ENCODE measurements at regions of chr19 and their contacts with region 1.

Region 1: DNA sequence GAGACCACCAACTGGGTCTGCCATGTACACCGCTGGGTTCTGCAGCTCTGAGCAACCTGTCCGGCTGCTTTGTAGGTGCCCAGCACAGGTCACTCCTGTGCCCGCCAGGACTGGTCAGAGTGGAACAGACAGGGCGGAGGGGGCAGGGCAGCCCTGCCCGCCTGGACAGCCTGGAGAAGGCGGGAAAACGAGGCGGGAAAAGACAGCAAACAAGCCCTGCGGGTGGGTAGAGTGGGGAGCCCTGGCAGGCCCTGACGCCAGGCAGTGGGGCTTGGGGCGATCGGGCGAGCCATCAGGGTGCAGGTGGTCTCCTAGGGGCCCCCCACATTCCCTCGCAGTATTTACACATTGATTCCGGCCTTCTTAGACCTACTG is 533 bp upstream of the UHRF1 start:
- DNase-seq: peak in 1 of 2 experiments; percentile 14
- H3K4me3 ChIP-seq: peak overlapping the region; percentile 84; the same call in 1 of the 2 replicates
- H3K4me3 Mint-ChIP-seq: peak overlapping the region; percentile 76
- H3K27ac Mint-ChIP-seq: peak overlapping the region; percentile 22
- H3K4me1 ChIP-seq: peaks cover 20% of the 10 kb centered on the region
- H3K4me1 Mint-ChIP-seq: peaks cover 13% of the 10 kb centered on the region
- H3K27me3 ChIP-seq: no peaks in the 10 kb centered on the region
- H3K27me3 Mint-ChIP-seq: no peaks in the 10 kb centered on the region
- CTCF ChIP-seq: no peak

Region 2: GRCh38 chr19:4873930-4874329 is 34.8 kb before region 1 on chr19:
- CTCF ChIA-PET with region 1: interaction called, 5 read pairs
- POLR2A ChIA-PET with region 1: no interaction called
- intact Hi-C with region 1: loop called (anchors 1 kb)
- DNase-seq: no peak
- H3K4me3 ChIP-seq: no peak overlapping the region
- H3K4me3 Mint-ChIP-seq: no peak overlapping the region
- H3K27ac Mint-ChIP-seq: no peak overlapping the region
- H3K4me1 ChIP-seq: no peaks in the 10 kb centered on the region
- H3K4me1 Mint-ChIP-seq: peaks cover 6% of the 10 kb centered on the region
- H3K27me3 ChIP-seq: no peaks in the 10 kb centered on the region
- H3K27me3 Mint-ChIP-seq: no peaks in the 10 kb centered on the region
- CTCF ChIP-seq: no peak

Region 3: GRCh38 chr19:5850743-5851293 is 942.0 kb after region 1 on chr19:
- CTCF ChIA-PET with region 1: no interaction called
- POLR2A ChIA-PET with region 1: interaction called, 14 read pairs
- intact Hi-C with region 1: no loop called
- DNase-seq: no peak
- H3K4me3 ChIP-seq: no peak overlapping the region
- H3K4me3 Mint-ChIP-seq: no peak overlapping the region
- H3K27ac Mint-ChIP-seq: no peak overlapping the region
- H3K4me1 ChIP-seq: no peaks in the 10 kb centered on the region
- H3K4me1 Mint-ChIP-seq: no peaks in the 10 kb centered on the region
- H3K27me3 ChIP-seq: no peaks in the 10 kb centered on the region
- H3K27me3 Mint-ChIP-seq: no peaks in the 10 kb centered on the region
- CTCF ChIP-seq: no peak